Dendritic cell treated with granulocyte-macrophage colony-stimulating factor and Interleukin-4, amounts not matched to agents 40 ng/mL and 50 ng/mL, for 4 days (primary cell): ENCODE measurements at regions of chr3 and their contacts with region 1.

Region 1: DNA sequence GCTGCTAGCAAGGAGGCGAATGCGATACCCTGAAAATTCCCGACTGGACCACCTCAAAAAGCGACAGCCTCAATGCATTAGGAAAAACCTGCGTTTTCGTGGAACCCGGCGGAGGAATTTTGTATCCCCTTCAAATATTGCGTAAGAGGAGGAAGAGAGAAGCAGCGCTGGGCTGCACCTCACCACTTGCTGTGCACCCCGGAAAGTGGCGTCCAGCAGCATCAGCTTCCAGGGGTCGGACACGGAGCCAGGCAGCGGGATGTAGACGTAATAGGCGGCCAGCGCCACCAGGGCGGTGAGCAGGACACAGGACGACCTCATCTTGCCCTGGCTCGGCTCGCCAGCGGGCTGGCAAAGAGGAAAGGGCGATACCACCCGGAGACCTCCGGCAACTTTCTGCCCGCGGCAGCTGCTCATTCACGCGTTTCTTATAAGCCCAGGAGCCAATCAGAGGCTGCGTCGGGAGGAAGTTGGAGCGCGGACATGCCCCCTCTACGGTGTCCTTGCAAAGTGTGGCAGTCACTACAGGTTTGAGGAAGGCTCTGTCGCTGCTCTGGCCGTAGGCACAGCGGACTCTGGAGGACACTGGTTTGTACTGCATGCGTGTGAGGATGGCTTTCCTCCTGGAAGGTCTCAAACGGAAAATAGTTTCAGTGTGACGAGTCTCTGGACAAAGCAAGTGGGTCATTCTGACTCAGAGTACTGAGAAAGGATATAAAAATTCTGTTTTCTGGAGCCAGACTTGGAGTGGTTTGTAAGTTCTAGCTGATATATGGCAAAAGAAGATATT is at the start of gene NCEH1:
- H3K4me3 Mint-ChIP-seq: peak within 1 kb of the TSS; percentile 96
- H3K27ac Mint-ChIP-seq: peak within 1 kb of the TSS; percentile 99
- H3K4me1 Mint-ChIP-seq: peaks cover 22% of the 10 kb centered on the region
- H3K27me3 Mint-ChIP-seq: no peaks in the 10 kb centered on the region

Region 2: DNA sequence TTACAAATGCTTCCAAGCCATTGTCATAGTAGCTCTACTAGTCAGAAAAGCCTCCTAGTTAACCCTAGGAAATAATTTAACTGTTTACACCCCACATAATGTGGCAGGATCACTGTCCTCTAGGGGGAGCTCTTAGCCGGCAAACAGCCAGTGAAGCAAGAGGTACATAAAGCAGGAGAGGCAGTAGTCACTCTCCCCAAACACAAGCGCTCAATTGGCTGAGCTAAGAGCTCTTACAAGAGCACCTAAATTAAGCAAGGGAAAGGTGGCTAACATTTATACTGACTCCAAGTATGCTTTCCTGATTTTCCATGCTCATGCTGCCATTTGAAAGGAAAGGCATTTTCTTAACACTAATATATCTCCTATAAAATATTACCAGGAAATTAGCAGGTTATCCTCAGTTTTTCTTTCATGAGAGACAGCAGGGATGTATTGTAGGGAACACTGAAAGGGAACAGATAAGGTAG is 37.6 kb before region 1 on chr3:
- intact Hi-C with region 1: loop called (anchors 1 kb)
- H3K4me3 Mint-ChIP-seq: no peak overlapping the region
- H3K27ac Mint-ChIP-seq: no peak overlapping the region
- H3K4me1 Mint-ChIP-seq: peaks cover 16% of the 10 kb centered on the region
- H3K27me3 Mint-ChIP-seq: no peaks in the 10 kb centered on the region

Region 3: GRCh38 chr3:172692751-172693338 is 18.0 kb before region 1 on chr3:
- intact Hi-C with region 1: loop called (anchors 2 kb)
- H3K4me3 Mint-ChIP-seq: no peak overlapping the region
- H3K27ac Mint-ChIP-seq: peak overlapping the region; percentile 83
- H3K4me1 Mint-ChIP-seq: peaks cover 34% of the 10 kb centered on the region
- H3K27me3 Mint-ChIP-seq: no peaks in the 10 kb centered on the region

Region 4: DNA sequence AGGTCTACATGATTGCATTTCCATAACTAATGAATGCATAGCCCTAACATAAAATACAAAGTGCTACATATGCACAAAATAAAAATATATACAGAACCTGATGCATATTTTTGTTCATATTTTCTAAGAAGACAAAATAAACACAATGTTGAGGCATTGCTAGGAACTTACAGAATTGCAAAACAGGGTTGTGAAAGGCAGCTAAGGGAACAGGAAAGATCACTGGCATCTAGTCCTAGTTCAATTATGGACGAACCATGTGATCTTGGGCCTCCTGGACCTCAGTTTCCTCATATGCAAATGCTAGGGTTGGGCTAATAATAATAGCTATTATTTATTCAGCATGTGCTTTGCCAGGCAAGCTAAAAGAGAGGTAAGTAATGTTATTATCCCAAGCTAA is 15.5 kb after region 1 on chr3:
- intact Hi-C with region 1: no loop called
- H3K4me3 Mint-ChIP-seq: no peak overlapping the region
- H3K27ac Mint-ChIP-seq: no peak overlapping the region
- H3K4me1 Mint-ChIP-seq: no peaks in the 10 kb centered on the region
- H3K27me3 Mint-ChIP-seq: no peaks in the 10 kb centered on the region